Natural killer cell (primary cell): ENCODE measurements at regions of chr3 and their contacts with region 1.

Region 1: DNA sequence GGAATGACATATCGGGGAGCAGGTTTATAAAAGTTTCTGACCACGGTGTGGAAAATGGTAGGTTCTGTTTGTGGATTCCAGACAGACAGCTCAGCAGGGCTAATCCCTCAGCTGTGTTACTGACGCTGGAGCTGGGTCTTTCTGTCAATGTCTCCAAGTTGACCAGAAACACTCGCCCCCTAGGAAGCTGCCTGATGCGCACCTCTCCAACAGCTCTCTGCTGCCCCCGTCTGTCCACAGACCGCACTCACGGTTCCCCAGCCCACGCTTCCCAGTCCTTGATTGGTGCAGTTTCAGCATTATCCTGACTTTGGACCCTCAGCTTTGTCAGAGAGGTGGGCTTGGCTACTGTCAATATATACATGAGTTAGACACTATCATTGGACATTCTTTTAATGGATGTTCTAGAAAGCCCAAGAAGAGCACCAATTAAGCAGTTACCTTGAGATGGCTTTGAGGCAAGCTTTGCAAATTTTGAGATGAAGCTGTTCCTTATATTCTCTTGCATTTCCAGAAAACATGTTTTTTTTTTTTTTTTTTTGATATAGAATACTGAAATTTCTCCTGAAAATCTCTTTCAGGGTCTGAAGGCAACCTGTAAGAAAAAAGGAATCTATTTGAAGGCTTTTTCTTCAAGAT is 98.9 kb upstream of the TBC1D5 start:
- DNase-seq: peak; percentile 66 to 80
- ATAC-seq: peak; percentile 84 to 98 (median 86)
- H3K4me3 ChIP-seq: no peak overlapping the region
- H3K4me3 Mint-ChIP-seq: no peak overlapping the region
- H3K27ac ChIP-seq: no peak overlapping the region
- H3K27ac Mint-ChIP-seq: no peak overlapping the region
- H3K4me1 ChIP-seq: no peaks in the 10 kb centered on the region
- H3K4me1 Mint-ChIP-seq: no peaks in the 10 kb centered on the region
- H3K27me3 ChIP-seq: no peaks in the 10 kb centered on the region
- H3K27me3 Mint-ChIP-seq: peaks cover 0 to 8% of the 10 kb centered on the region in 2 donors
- CTCF ChIP-seq: peak; percentile 92

Region 2: GRCh38 chr3:17258823-17259436 is 582.4 kb before region 1 on chr3:
- intact Hi-C with region 1: loop called (anchors 1 kb)
- DNase-seq: peak in 1 of 2 donors; percentile 75
- ATAC-seq: peak in 1 of 3 donors; percentile 40
- H3K4me3 ChIP-seq: no peak overlapping the region
- H3K4me3 Mint-ChIP-seq: no peak overlapping the region
- H3K27ac ChIP-seq: no peak overlapping the region
- H3K27ac Mint-ChIP-seq: no peak overlapping the region
- H3K4me1 ChIP-seq: no peaks in the 10 kb centered on the region
- H3K4me1 Mint-ChIP-seq: no peaks in the 10 kb centered on the region
- H3K27me3 ChIP-seq: no peaks in the 10 kb centered on the region
- H3K27me3 Mint-ChIP-seq: no peaks in the 10 kb centered on the region
- CTCF ChIP-seq: peak; percentile 94

Region 3: DNA sequence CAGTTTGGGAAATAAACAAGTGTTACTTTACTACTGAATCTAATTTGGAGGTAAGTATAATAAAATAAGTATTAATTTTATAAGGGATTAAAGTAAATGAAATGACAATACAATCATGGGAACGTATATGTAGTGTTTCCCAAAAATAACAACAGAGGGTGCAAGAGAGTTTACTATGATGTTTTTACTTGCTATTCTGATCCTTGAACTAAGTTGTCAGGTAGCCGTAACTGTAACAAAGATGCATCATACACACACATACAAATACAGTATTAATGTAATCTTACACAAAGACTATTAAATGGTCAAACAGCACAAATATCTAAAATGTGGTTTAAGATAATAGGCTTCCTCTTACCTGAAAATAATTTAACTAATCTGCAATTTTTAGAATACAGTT is 410.3 kb before region 1 on chr3:
- intact Hi-C with region 1: loop called (anchors 1 kb)
- DNase-seq: peak in 1 of 2 donors; percentile 16
- ATAC-seq: no peak
- H3K4me3 ChIP-seq: no peak overlapping the region
- H3K4me3 Mint-ChIP-seq: no peak overlapping the region
- H3K27ac ChIP-seq: no peak overlapping the region
- H3K27ac Mint-ChIP-seq: no peak overlapping the region
- H3K4me1 ChIP-seq: no peaks in the 10 kb centered on the region
- H3K4me1 Mint-ChIP-seq: peaks cover 0 to 5% of the 10 kb centered on the region in 2 donors
- H3K27me3 ChIP-seq: no peaks in the 10 kb centered on the region
- H3K27me3 Mint-ChIP-seq: no peaks in the 10 kb centered on the region
- CTCF ChIP-seq: peak; percentile 34

Region 4: DNA sequence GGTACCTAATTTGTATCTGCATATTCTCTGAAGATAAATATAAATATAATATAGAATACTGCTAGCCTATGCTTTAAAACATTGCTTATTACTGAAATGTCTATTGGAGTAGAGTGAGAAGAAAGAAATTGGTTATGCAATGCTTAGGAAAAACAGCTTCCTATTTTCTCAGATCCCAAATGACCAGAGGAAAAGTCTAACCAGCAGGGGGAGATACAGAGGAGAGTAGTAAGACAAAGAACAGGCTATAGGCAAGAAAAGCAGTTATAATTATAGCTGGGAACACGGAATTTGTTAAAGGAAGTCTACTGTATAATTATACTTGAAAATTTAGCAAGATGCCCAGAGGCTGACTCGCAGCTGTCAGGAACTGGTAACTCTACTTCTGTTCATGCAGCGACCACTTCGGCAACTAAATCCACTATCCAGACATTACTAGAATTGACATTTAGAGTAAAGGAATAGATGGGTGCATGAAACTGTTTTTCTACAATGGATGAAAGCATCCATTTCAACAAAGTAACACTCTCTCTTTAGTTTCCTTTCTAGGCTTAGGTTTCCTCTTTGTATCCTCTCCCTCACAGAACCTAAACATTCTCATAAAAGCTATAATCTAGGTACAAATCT is 196.1 kb before region 1 on chr3:
- intact Hi-C with region 1: loop called (anchors 1 kb)
- DNase-seq: peak in 1 of 2 donors; percentile 57
- ATAC-seq: no peak
- H3K4me3 ChIP-seq: no peak overlapping the region
- H3K4me3 Mint-ChIP-seq: no peak overlapping the region
- H3K27ac ChIP-seq: no peak overlapping the region
- H3K27ac Mint-ChIP-seq: no peak overlapping the region
- H3K4me1 ChIP-seq: no peaks in the 10 kb centered on the region
- H3K4me1 Mint-ChIP-seq: peaks cover 0 to 4% of the 10 kb centered on the region in 2 donors
- H3K27me3 ChIP-seq: no peaks in the 10 kb centered on the region
- H3K27me3 Mint-ChIP-seq: no peaks in the 10 kb centered on the region
- CTCF ChIP-seq: peak; percentile 54